Breast epithelium (tissue), 4 donors: ENCODE measurements at regions of chr21 and their contacts with region 1.

Region 1: DNA sequence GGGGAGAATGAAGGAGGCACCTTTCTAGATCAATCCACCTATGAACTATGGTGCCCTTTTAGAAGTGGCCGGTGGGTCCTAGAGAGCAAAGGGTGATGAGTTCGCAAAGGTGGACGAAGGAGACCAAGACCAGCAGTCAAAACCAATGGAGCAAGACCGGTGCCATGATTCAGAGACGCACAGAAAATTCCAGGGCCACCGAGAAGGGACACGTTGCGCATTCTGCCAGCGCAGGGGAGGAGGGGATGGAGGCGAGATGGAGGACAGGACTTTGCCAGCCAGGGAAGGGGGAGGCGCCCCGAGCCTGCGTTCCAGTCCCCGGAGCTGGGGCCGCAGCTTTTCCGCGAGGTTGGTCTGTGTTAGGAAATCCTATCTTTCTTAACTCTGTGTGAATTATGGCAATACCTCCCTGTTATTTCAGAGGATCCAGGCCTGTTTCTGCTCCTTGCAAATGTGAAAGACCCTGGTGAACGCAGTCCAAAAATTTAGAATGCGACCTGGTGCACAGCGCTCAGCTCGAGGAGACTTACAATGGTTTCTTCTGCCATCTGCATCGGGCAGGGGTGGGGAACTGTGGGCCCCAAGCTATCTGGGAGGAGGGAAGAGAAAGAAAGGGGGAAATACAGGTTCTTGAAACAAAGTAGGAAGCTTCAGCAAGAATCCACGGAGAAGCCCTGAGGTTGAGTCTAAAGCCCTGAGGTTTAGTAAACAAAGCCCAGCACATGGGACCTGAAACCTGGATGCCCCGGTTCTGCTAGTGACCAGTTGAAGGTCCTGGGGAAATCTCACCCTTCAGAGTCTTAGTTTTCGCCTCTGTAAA is 129.4 kb downstream of the MRPS6 start:
- DNase-seq: peak in 1 of 2 donors; percentile 8
- H3K4me3 ChIP-seq: peak overlapping the region in 2 of 3 donors; percentile 56 to 67
- H3K27ac ChIP-seq: peak overlapping the region in 1 of 2 donors; percentile 50
- H3K4me1 ChIP-seq: no peaks in the 10 kb centered on the region
- H3K27me3 ChIP-seq: no peaks in the 10 kb centered on the region
- CTCF ChIP-seq: peak in 1 of 3 donors; percentile 11
- POLR2A ChIP-seq: no peak

Region 2: GRCh38 chr21:34148419-34148804 is 54.4 kb before region 1 on chr21:
- intact Hi-C with region 1: loop called (anchors 2 kb)
- DNase-seq: no peak
- H3K4me3 ChIP-seq: no peak overlapping the region
- H3K27ac ChIP-seq: peak overlapping the region; percentile 10 to 36
- H3K4me1 ChIP-seq: peaks cover 0 to 5% of the 10 kb centered on the region in 2 donors
- H3K27me3 ChIP-seq: no peaks in the 10 kb centered on the region
- CTCF ChIP-seq: no peak
- POLR2A ChIP-seq: no peak

Region 3: GRCh38 chr21:34498623-34499022 is 295.9 kb after region 1 on chr21:
- intact Hi-C with region 1: no loop called
- DNase-seq: peak in 1 of 2 donors; percentile 49
- H3K4me3 ChIP-seq: no peak overlapping the region
- H3K27ac ChIP-seq: no peak overlapping the region
- H3K4me1 ChIP-seq: no peaks in the 10 kb centered on the region
- H3K27me3 ChIP-seq: no peaks in the 10 kb centered on the region
- CTCF ChIP-seq: no peak
- POLR2A ChIP-seq: no peak